Heart right ventricle (tissue), 16 donors: ENCODE measurements at regions of chr3 and their contacts with region 1.

Region 1: DNA sequence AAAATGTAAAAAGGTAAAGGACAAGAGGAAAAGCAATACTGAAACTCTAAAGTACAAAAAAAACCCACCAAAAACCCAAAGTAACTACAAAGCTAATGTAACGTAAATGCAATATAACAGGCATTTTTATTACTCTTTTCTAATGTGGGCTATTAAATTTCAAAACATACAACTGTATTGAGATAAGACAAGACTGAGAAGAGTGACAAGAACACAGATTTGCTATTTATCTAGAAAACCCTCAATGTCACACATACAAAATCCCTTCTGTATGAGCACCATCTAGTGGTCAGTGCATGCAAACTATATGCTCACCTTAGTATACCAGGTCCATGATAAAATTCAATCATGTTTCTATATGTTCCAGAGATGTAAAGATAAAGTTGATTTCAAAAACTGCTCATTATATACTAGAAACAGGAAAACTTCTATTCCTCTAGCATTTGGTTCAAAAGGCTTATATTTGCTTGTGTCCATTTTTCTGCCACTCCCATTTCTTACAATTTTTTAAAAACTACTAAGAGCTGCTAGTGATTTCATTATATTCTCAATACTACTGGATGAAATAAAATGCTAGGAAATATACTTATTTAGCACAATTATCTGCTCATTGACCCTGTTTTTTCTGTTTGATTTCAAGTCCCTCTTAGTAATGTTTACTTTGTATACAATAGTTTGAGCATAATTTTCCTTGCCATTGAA is 111.4 kb downstream of the DLG1 start:
- DNase-seq: peak in 1 of 2 donors; percentile 21
- ATAC-seq: peak in 6 of 8 donors; percentile 52 to 77 (median 66)
- H3K4me3 ChIP-seq: no peak overlapping the region
- H3K27ac ChIP-seq: no peak overlapping the region
- H3K4me1 ChIP-seq: peaks cover 0 to 14% (median 5%) of the 10 kb centered on the region in 9 donors
- H3K27me3 ChIP-seq: no peaks in the 10 kb centered on the region
- CTCF ChIP-seq: peak; percentile 55 to 88 (median 83)

Region 2: GRCh38 chr3:196969660-196970546 is 217.1 kb before region 1 on chr3:
- intact Hi-C with region 1: loop called in 5 of 10 experiments (anchors 5 to 10 kb)
- DNase-seq: peak; percentile 27 to 74
- ATAC-seq: peak in 7 of 8 donors; percentile 64 to 89 (median 82)
- H3K4me3 ChIP-seq: peak overlapping the region; percentile 77 to 99 (median 87)
- H3K27ac ChIP-seq: peak overlapping the region in 8 of 10 donors; percentile 77 to 90 (median 86)
- H3K4me1 ChIP-seq: peaks cover 5 to 18% (median 11%) of the 10 kb centered on the region in 9 donors
- H3K27me3 ChIP-seq: no peaks in the 10 kb centered on the region
- CTCF ChIP-seq: peak; percentile 49 to 98 (median 85)

Region 3: DNA sequence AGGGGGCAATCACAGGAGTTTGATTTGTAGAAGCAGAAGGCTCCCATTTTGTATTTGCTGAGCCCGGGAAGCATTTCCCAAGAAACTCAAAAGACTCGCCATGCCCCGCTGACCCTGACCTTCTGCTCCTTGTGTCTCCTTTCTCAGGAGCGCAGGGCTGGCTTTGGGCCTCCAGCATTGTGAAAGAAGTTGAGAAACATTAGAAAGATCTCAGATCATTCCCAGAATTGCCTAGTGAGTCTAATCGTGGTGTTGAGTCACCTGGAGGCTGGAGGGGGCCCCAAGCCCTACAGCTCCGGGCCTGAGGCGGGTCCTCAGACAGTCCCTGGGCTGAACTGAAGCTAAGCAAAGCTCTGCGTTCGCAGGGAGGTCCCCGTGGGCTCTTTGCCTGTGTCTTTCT is 207.5 kb before region 1 on chr3:
- intact Hi-C with region 1: loop called in 7 of 10 experiments (anchors 2 to 10 kb)
- DNase-seq: no peak
- ATAC-seq: peak in 1 of 8 donors; percentile 37
- H3K4me3 ChIP-seq: no peak overlapping the region
- H3K27ac ChIP-seq: no peak overlapping the region
- H3K4me1 ChIP-seq: peaks cover 0 to 8% (median 0%) of the 10 kb centered on the region in 9 donors
- H3K27me3 ChIP-seq: peaks cover 0 to under 1% (median 0%) of the 10 kb centered on the region in 7 donors
- CTCF ChIP-seq: no peak

Region 4: DNA sequence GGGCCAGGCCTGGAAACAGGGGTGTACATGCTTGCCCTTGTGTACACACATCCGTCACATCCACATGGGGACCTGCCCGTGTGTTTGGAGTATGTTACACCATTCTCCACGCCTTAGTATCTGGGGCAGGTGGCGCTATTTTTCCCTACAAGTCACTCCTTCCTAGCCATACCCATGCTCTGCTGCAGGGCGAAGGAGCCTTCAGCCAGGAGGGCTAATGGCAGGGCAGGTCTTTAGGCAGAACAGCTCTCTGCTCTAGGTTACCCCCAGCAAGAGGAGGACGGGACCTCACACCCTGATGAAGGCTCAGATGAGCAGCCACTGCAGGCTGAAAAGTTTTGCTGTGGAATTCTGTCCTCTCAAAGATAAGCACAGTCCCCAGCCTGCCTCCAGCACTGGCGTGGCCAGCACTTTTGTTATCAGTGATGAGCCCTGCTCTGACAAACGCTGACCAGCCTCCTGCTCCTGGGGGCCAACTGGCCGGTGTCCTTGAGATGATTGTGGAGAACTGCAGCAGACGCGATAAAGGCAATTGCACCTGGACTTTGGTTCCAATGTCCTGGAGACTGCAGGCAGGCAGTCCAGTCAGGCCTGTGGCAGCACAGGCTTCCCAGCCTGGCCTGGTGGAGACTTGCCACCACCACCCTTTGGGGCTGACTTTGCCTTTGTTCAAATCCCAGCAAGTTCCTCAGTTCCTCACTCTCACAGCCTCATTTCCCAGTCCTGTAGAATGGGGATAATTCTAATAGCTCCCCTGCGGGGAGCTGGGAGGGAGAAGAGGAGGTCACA is 198.6 kb before region 1 on chr3:
- intact Hi-C with region 1: loop called in 2 of 10 experiments (anchors 5 to 10 kb)
- DNase-seq: no peak
- ATAC-seq: peak in 7 of 8 donors; percentile 34 to 81 (median 41)
- H3K4me3 ChIP-seq: no peak overlapping the region
- H3K27ac ChIP-seq: no peak overlapping the region
- H3K4me1 ChIP-seq: peaks cover 0 to 19% (median 0%) of the 10 kb centered on the region in 9 donors
- H3K27me3 ChIP-seq: peaks cover 0 to 5% (median 0%) of the 10 kb centered on the region in 7 donors
- CTCF ChIP-seq: peak in 1 of 9 donors; percentile 4

Region 5: DNA sequence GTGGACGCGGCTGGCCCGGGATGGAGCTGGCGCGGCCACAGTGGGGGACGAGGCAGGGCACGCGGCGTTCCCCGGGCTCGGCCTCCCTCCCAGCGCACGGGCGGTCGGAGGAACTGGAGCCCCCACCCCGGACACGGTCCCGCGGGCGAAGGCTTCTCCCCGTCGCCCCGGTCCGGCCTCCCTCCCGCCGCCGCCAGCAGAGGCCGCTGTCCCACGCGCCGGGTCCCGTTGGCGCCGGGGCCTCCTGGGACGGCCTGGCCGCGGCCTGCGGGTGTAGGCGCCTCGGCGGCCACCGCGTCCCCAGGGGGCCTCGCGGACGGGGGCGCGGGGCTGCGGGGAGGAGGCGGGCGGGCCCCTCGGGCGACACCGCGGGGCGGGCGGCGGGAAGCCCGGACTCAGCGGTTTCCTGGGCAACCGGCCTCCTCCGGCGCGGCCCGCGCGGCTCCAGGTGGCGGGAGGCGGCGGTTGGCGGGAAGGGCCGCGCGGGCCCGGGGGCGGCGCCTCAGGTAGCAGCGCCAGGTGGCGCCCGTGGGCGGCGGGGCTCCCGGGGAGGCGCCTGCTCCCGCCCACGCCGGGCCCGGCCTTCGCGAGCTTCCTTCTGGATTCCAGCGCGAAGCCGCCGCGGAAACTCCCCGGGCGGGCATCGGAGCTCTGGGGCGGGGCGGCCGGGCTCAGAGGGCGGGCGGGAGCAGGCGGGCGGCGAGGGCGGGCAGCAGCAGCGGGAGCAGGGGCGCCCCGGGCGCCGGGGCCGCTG is 184.2 kb before region 1 on chr3:
- intact Hi-C with region 1: loop called in 9 of 10 experiments (anchors 1 to 10 kb)
- DNase-seq: peak; percentile 62 to 79
- ATAC-seq: peak; percentile 81 to 92 (median 88)
- H3K4me3 ChIP-seq: peak overlapping the region; percentile 19 to 75 (median 68)
- H3K27ac ChIP-seq: peak overlapping the region; percentile 19 to 86 (median 74)
- H3K4me1 ChIP-seq: peaks cover 0 to 18% (median 10%) of the 10 kb centered on the region in 9 donors
- H3K27me3 ChIP-seq: no peaks in the 10 kb centered on the region
- CTCF ChIP-seq: peak; percentile 65 to 88 (median 76)

Region 6: DNA sequence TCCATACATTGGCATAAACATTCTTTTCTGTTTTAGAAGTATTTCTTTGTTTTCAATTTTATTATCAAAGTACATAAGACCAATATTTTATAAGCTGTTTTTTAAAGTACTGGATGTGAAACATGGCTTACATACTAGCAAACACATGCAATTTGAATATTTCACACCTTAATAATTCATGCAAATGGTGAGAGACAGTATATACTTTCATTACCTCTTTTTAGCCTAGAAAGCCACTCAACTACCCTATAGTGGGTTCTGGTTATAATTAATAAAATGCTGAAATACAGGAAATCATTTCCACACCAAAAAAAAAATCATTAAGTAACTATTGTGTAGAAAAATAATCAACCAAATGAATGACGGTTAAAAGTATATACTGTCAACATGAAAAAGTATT is 119.0 kb before region 1 on chr3:
- intact Hi-C with region 1: loop called in 1 of 10 experiments (anchors 10 kb)
- DNase-seq: no peak
- ATAC-seq: no peak
- H3K4me3 ChIP-seq: no peak overlapping the region
- H3K27ac ChIP-seq: no peak overlapping the region
- H3K4me1 ChIP-seq: no peaks in the 10 kb centered on the region
- H3K27me3 ChIP-seq: no peaks in the 10 kb centered on the region
- CTCF ChIP-seq: no peak